ENCODE measurements at regions of chr5 and their contacts with region 1.

Region 1: GRCh38 chr5:143041972-143042770 is 272.0 kb downstream of the ARHGAP26 start:
- DNase-seq: no peak
- ATAC-seq: peak; percentile 74 to 90 (median 86)
- H3K4me3 ChIP-seq: no peak overlapping the region
- H3K27ac ChIP-seq: peak overlapping the region; percentile 1 to 86 (median 49)
- H3K4me1 ChIP-seq: peaks cover 4 to 32% (median 11%) of the 10 kb centered on the region in 9 donors
- H3K27me3 ChIP-seq: no peaks in the 10 kb centered on the region
- CTCF ChIP-seq: no peak

Region 2: DNA sequence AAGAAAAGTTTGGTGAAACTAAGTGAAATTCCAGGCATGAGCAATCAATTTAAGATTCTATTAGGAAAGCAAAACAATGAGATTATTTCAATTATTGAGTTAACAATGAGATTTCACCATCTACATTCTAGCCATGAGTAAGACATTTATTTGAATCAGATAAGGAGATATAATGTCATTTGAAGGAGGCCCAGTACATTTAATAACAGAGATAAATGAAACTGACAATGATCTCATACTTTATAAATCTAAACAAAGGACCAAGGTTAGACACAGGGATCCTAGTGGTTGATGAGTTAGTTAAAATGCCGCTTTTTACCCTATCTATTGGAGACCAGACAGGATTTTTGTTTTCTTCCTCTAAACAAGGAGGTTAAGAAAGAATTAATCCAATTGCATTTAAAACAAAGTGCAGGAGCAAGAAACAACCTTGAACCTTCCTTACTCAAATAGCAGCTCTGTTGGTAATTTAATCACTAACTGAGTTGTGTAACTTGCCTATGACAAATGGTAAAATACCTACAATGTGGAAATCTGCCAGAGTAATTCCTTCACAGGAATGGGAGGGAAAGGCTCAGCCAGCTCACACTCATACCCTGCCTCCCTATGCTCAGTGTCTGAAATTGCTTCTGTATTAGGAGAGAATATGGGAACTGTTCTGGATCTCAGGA is 464.8 kb after region 1 on chr5:
- intact Hi-C with region 1: loop called in 1 of 10 experiments (anchors 10 kb)
- DNase-seq: no peak
- ATAC-seq: peak in 7 of 8 donors; percentile 42 to 92 (median 74)
- H3K4me3 ChIP-seq: no peak overlapping the region
- H3K27ac ChIP-seq: peak overlapping the region in 4 of 10 donors; percentile 4 to 34 (median 22)
- H3K4me1 ChIP-seq: peaks cover 0 to 32% (median 15%) of the 10 kb centered on the region in 9 donors
- H3K27me3 ChIP-seq: no peaks in the 10 kb centered on the region
- CTCF ChIP-seq: peak in 1 of 9 donors; percentile 14